HEK293 (cell line): ENCODE measurements at regions of chr17 and their contacts with region 1.

Region 1: GRCh38 chr17:75861927-75862317 is 6.8 kb upstream of the WBP2 start:
- H3K4me3 ChIP-seq: no peak overlapping the region
- H3K27ac ChIP-seq: no peak overlapping the region
- H3K4me1 ChIP-seq: 0 out of 2 replicates have a peak, but pooled peaks cover 4% of the 10 kb centered on the region
- CTCF ChIP-seq: no peak

Region 2: DNA sequence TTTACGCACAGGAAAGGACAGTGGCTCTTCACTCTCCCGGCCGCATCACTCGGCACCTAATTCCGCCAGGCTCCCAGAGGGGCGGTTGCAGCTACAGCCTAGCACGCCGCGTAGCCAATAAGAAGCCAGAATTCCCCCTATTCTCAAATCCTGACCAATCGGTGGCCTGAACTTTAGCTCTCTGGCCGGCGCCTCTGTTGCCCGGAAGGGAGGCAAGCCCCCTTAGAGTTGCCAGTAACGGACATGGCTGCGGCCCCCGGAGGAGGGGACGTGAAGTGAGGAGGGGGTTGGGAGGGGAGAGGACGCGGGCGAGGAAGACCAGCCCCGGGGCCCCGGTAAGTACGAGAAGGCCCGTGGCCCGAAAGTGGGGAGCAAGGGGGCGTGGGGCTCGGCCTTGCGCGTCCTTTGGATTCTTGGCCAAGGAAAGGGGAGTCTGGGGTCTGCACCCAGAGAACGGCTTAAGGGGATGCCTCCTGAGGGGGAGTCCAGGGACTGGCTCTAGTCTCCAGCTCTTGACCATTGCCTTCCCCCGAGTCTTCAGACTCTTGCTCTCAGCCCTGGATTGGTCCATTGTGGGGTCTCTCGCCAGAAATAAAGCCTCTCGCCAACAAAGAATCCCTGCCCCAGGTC is 405.4 kb before region 1 on chr17 and contains the start of gene TMEM94:
- CTCF ChIA-PET with region 1: no interaction called
- POLR2A ChIA-PET with region 1: no interaction called
- H3K4me3 ChIP-seq: peak within 1 kb of the TSS; percentile 64
- H3K27ac ChIP-seq: peak within 1 kb of the TSS; percentile 84
- H3K4me1 ChIP-seq: peaks cover 20% of the 10 kb centered on the region
- CTCF ChIP-seq: no peak

Region 3: DNA sequence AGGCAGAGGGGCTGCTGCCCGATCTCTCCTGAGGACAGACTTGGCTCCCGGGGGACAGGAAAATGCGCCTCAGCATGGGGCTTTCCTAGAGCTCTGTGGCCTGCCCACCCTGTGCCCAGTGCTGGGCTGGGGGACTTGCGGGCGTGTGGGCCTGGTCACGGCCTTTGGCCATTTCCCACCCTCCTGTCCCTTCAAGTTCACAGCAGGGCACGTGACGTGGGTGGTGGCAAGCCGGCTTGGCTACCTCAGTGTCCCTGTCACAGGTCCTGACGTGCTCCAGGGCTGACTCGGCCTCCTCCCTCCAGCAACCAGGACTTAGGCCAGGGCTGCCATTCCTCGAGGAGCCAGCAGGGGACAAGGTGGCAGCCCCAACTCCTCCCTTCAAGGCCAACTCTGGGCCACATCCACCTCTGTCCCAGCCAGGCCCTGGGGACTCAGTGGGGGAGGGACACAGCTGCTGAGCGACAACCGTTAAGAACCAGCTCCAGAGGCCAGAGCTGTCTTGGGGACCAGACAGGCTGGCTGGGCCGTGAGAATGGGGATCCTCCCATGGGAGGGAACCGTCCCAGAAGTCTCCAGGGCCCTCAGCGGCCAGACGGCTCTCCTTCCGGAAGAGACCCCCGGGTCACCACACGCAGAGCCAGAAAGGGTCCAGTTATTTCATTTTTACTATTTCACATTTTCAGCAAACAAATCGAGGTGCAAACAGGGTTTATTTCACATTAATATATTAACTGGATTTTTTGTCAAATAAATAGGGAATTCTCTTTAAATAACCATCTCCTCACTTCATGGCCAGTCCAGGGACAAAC is 16.7 kb before region 1 on chr17:
- CTCF ChIA-PET with region 1: interaction called, 40 read pairs
- POLR2A ChIA-PET with region 1: interaction called, 8 read pairs
- H3K4me3 ChIP-seq: no peak overlapping the region
- H3K27ac ChIP-seq: no peak overlapping the region
- H3K4me1 ChIP-seq: no peaks in the 10 kb centered on the region; the same call in 1 of the 2 replicates
- CTCF ChIP-seq: peak; percentile 91

Region 4: GRCh38 chr17:75896415-75897159 is 34.7 kb after region 1 on chr17 and contains the start of gene TRIM65:
- CTCF ChIA-PET with region 1: interaction called, 11 read pairs
- POLR2A ChIA-PET with region 1: interaction called, 6 read pairs
- H3K4me3 ChIP-seq: peak within 1 kb of the TSS; percentile 86
- H3K27ac ChIP-seq: peak within 1 kb of the TSS; percentile 98
- H3K4me1 ChIP-seq: peaks cover 10% of the 10 kb centered on the region
- CTCF ChIP-seq: no peak